Ovary (tissue), 10 donors: ENCODE measurements at regions of chr15 and their contacts with region 1.

Region 1: GRCh38 chr15:96466548-96466947 is 136.0 kb downstream of the NR2F2 start:
- DNase-seq: no peak
- H3K4me3 ChIP-seq: no peak overlapping the region
- H3K27ac ChIP-seq: no peak overlapping the region
- H3K4me1 ChIP-seq: no peaks in the 10 kb centered on the region
- H3K27me3 ChIP-seq: no peaks in the 10 kb centered on the region
- CTCF ChIP-seq: no peak
- EP300 ChIP-seq: no peak
- POLR2A ChIP-seq: no peak

Region 2: GRCh38 chr15:96037584-96037983 is 429.0 kb before region 1 on chr15:
- intact Hi-C with region 1: no loop called
- DNase-seq: no peak
- H3K4me3 ChIP-seq: no peak overlapping the region
- H3K27ac ChIP-seq: no peak overlapping the region
- H3K4me1 ChIP-seq: peaks cover 6% of the 10 kb centered on the region
- H3K27me3 ChIP-seq: no peaks in the 10 kb centered on the region
- CTCF ChIP-seq: no peak
- EP300 ChIP-seq: no peak
- POLR2A ChIP-seq: no peak

Region 3: GRCh38 chr15:96225320-96226259 is 241.0 kb before region 1 on chr15:
- intact Hi-C with region 1: no loop called
- DNase-seq: no peak
- H3K4me3 ChIP-seq: no peak overlapping the region
- H3K27ac ChIP-seq: no peak overlapping the region
- H3K4me1 ChIP-seq: no peaks in the 10 kb centered on the region
- H3K27me3 ChIP-seq: no peaks in the 10 kb centered on the region
- CTCF ChIP-seq: no peak
- EP300 ChIP-seq: no peak
- POLR2A ChIP-seq: no peak

Region 4: DNA sequence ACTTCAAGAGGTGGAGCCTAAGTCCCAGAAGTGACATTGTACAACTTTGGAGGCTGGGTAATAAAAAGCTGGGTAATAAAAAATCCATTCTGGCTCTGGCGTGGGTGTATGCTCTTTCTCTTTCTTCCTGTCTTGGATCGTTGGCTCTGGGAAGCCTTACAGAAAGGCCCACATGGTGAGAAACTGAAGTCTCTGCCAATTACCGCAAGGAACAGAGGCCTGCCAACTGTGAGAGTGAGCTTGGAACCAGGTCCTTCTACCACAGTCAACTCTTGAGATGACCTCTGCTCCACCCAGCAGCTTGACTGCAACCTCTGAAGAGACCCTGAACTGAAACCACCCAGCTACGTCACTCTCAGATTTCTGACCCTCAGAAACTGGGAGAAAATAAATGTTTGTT is 85.1 kb before region 1 on chr15:
- intact Hi-C with region 1: no loop called
- DNase-seq: no peak
- H3K4me3 ChIP-seq: no peak overlapping the region
- H3K27ac ChIP-seq: no peak overlapping the region
- H3K4me1 ChIP-seq: no peaks in the 10 kb centered on the region
- H3K27me3 ChIP-seq: no peaks in the 10 kb centered on the region
- CTCF ChIP-seq: no peak
- EP300 ChIP-seq: no peak
- POLR2A ChIP-seq: no peak

Region 5: DNA sequence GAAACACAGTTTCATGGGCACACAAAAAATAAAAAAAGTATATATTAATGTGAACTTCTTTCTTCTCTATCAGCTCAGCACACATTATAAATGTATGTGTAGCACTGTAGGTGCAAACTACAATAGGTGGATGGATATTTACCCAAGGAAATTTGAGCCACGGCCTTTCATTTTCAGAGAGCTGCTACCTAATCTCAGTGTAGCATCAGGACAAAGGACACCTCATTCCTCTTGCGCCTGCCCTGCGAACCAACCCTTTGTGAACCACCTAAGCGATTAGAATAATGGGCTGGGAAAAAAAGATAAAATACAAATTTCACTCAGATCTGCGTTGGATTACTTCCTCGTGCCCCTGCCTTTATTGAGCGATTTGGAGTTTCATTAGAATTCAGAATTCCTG is 127.2 kb after region 1 on chr15:
- intact Hi-C with region 1: no loop called
- DNase-seq: no peak
- H3K4me3 ChIP-seq: no peak overlapping the region
- H3K27ac ChIP-seq: no peak overlapping the region
- H3K4me1 ChIP-seq: no peaks in the 10 kb centered on the region
- H3K27me3 ChIP-seq: no peaks in the 10 kb centered on the region
- CTCF ChIP-seq: no peak
- EP300 ChIP-seq: no peak
- POLR2A ChIP-seq: no peak

Region 6: GRCh38 chr15:98123834-98124474 is 1657.4 kb after region 1 on chr15:
- intact Hi-C with region 1: loop called in 1 of 4 experiments (anchors 5 kb)
- DNase-seq: no peak
- H3K4me3 ChIP-seq: no peak overlapping the region
- H3K27ac ChIP-seq: no peak overlapping the region
- H3K4me1 ChIP-seq: no peaks in the 10 kb centered on the region
- H3K27me3 ChIP-seq: no peaks in the 10 kb centered on the region
- CTCF ChIP-seq: no peak
- EP300 ChIP-seq: no peak
- POLR2A ChIP-seq: no peak